Esophagus muscularis mucosa (tissue), 4 donors: ENCODE measurements at regions of chrX and their contacts with region 1.

Region 1: GRCh38 chrX:7889680-7890079 is 37.5 kb downstream of the PNPLA4 start:
- DNase-seq: no peak
- H3K4me3 ChIP-seq: no peak overlapping the region
- H3K27ac ChIP-seq: no peak overlapping the region
- H3K4me1 ChIP-seq: no peaks in the 10 kb centered on the region
- H3K27me3 ChIP-seq: no peaks in the 10 kb centered on the region
- CTCF ChIP-seq: no peak
- EP300 ChIP-seq: no peak
- POLR2A ChIP-seq: no peak

Region 2: DNA sequence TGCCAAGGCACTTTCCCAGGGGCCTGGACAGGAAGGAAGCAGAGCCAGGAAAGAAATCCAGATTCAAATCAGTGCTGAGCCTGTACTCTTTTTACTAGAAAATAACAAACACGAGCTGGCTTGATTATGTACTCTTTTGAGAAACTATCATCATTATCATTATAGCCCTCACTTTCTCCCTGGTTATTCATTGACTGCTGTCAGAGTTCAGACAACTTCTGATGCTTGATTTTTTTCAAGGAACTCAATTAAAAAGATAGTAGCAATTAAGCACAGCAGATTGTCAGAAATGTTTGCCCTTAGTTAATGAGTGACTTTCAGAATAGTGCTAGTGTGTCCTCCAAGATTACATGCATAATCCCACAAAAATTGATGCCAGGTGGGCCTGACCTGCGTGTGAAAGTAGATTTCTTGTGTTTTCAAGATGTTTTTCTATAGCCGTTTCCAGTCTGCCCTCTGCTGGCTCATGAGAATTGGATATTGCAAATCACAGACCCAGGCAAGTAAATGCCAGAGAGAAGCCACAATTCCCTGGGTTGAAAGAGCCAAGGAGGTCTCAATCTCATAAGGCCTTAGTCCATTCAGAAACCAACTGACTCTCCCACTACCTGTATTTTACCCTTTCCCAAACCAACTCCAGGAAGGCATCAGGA is 51.8 kb after region 1 on chrX:
- intact Hi-C with region 1: loop called (anchors 10 kb)
- DNase-seq: no peak
- H3K4me3 ChIP-seq: no peak overlapping the region
- H3K27ac ChIP-seq: no peak overlapping the region
- H3K4me1 ChIP-seq: peaks cover 0 to 5% (median 2%) of the 10 kb centered on the region in 4 donors
- H3K27me3 ChIP-seq: no peaks in the 10 kb centered on the region
- CTCF ChIP-seq: peak in 1 of 3 experiments; percentile 17
- EP300 ChIP-seq: no peak
- POLR2A ChIP-seq: no peak

Region 3: GRCh38 chrX:7987160-7988012 is 97.7 kb after region 1 on chrX:
- intact Hi-C with region 1: no loop called
- DNase-seq: no peak
- H3K4me3 ChIP-seq: no peak overlapping the region
- H3K27ac ChIP-seq: no peak overlapping the region
- H3K4me1 ChIP-seq: no peaks in the 10 kb centered on the region
- H3K27me3 ChIP-seq: no peaks in the 10 kb centered on the region
- CTCF ChIP-seq: no peak
- EP300 ChIP-seq: no peak
- POLR2A ChIP-seq: no peak